Endothelial cell of umbilical vein (primary cell): ENCODE measurements at regions of chr11 and their contacts with region 1.

Region 1: DNA sequence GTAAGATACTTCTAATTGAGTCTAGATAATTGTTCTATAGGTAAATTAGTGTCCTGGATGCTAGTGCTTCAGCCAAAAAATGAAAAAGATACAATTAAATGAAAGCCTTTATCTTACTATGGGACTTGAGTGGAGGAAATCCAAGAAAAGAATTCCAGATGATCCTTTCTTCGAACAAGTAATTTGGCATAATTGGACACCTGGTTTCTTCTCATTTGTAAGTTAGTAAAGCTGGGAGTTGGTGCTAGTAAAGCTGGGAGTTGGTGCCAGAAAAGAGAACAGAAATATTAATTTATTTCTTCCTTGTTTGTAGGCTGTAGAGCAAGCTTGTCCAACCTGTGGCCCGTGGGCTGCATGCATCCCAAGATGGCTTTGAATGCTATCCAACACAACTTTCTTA is 12.3 kb downstream of the OR51V1 start:
- DNase-seq: no peak
- H3K4me3 ChIP-seq: no peak overlapping the region
- H3K27ac ChIP-seq: no peak overlapping the region
- H3K4me1 ChIP-seq: no peaks in the 10 kb centered on the region
- H3K27me3 ChIP-seq: no peaks in the 10 kb centered on the region
- CTCF ChIP-seq: no peak
- POLR2A ChIP-seq: no peak

Region 2: DNA sequence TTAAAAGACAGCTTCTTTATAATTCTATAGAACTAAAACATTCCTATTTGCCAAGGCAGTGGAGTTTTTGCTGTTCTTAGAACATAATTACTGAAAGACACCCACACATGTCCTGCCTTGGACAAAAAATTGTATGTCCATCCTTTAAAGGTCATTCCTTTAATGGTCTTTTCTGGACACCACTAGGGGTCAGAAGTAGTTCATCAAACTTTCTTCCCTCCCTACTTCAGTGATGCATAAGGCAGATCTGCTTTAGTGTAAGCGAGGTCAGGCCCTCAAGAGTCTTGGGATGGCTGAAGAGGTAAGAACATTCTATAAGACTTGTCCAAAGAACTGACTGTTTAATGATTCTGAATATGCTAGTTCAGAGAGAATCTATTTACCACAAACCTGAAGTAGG is 16.6 kb after region 1 on chr11:
- CTCF ChIA-PET with region 1: no interaction called
- POLR2A ChIA-PET with region 1: no interaction called
- dilution Hi-C with region 1: no loop called
- intact Hi-C with region 1: no loop called
- DNase-seq: peak; percentile 72
- H3K4me3 ChIP-seq: no peak overlapping the region
- H3K27ac ChIP-seq: no peak overlapping the region
- H3K4me1 ChIP-seq: no peaks in the 10 kb centered on the region
- H3K27me3 ChIP-seq: no peaks in the 10 kb centered on the region
- CTCF ChIP-seq: peak; percentile 32 to 42
- POLR2A ChIP-seq: no peak

Region 3: DNA sequence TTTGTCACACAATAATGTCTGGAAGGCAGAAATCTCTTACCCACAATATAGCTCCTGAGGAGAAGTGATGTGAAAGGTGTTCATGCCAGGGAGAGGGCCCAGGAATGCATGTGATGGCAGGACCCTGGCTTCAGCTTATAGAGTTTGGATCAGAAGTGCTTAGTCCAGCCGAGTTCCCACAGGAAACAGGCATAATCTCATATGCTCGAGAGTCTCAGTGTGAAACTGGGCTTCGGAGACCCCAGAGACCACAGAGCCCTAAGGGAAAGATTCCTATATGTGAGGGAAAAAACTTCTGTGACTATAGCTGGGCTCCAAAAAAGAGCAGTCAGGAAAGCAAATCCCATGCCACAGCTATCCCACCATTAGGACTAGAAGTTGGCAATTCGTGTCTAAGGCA is 595.1 kb after region 1 on chr11 and contains the start of gene OR52N5:
- CTCF ChIA-PET with region 1: no interaction called
- POLR2A ChIA-PET with region 1: no interaction called
- dilution Hi-C with region 1: no loop called
- intact Hi-C with region 1: loop called (anchors 10 kb)
- DNase-seq: no peak
- H3K4me3 ChIP-seq: no peak within 1 kb of the TSS
- H3K27ac ChIP-seq: no peak within 1 kb of the TSS
- H3K4me1 ChIP-seq: no peaks in the 10 kb centered on the region
- H3K27me3 ChIP-seq: no peaks in the 10 kb centered on the region
- CTCF ChIP-seq: no peak
- POLR2A ChIP-seq: no peak
- total RNA-seq, gene OR52N5: not detected in 2 replicates